Activated CD8-positive, alpha-beta T cell treated with anti-CD3 and anti-CD28 coated beads for 36 hours (primary cell): ENCODE measurements at regions of chr7 and their contacts with region 1.

Region 1: GRCh38 chr7:17159500-17160037 is 138.9 kb upstream of the AHR start:
- DNase-seq: peak; percentile 30
- ATAC-seq: peak; percentile 92
- H3K4me3 Mint-ChIP-seq: no peak overlapping the region
- H3K27ac Mint-ChIP-seq: peak overlapping the region; percentile 88
- H3K4me1 Mint-ChIP-seq: peaks cover 40% of the 10 kb centered on the region
- H3K27me3 Mint-ChIP-seq: peaks cover 2% of the 10 kb centered on the region
- CTCF ChIP-seq: no peak

Region 2: GRCh38 chr7:17139081-17139480 is 20.5 kb before region 1 on chr7:
- CTCF ChIA-PET with region 1: interaction called, 4 read pairs
- POLR2A ChIA-PET with region 1: no interaction called
- intact Hi-C with region 1: loop called (anchors 1 kb)
- DNase-seq: no peak
- ATAC-seq: peak; percentile 87
- H3K4me3 Mint-ChIP-seq: peak overlapping the region; percentile 23
- H3K27ac Mint-ChIP-seq: peak overlapping the region; percentile 92
- H3K4me1 Mint-ChIP-seq: peaks cover 74% of the 10 kb centered on the region
- H3K27me3 Mint-ChIP-seq: no peaks in the 10 kb centered on the region
- CTCF ChIP-seq: no peak